Uterus (tissue), 4 donors: ENCODE measurements at regions of chr15 and their contacts with region 1.

Region 1: DNA sequence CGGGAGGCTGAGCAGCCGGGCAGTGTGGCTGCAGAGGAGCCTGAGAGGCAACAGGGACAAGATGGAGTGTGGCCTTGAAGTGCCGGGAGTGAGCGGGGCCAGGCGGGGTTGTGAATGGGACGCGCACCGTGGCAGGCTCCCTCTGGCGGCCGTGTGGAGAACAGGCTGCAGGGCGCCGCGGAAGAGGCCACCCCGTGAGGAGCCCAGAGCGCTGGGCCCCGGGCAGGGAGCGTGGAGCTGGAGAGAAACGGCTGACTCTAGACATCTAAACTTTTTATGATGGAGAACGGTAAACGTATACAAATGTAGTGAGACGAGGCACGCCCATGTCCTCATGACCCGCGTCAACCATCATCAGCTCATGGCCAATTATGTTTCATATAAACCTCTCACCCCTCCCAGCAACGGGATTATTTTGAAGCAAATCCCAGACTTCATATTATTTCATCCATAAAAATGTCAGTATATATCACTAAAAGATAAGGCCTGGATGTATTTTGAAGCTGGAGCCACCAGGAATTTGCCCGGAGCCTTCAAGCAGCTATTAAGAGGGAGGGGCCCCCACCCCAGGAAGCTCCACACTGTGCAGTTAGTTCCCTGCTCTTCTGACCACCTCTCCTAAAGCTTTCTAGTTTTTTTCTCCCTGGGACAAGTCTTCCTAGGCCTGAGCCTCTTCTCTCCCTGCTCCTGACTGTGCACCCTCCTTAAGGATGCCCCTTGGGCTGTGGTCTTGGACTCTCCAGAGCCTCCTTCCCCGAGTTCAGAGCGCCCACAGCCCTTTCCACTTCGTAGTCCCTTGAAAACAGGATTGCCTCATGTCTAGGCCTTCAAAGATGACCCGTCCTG is 149.4 kb downstream of the SMAD6 start:
- DNase-seq: peak; percentile 85 to 88
- H3K4me3 ChIP-seq: no peak overlapping the region
- H3K27ac ChIP-seq: peak overlapping the region; percentile 79 to 86
- H3K4me1 ChIP-seq: peaks cover 0 to 9% of the 10 kb centered on the region in 2 donors
- H3K27me3 ChIP-seq: no peaks in the 10 kb centered on the region
- CTCF ChIP-seq: peak; percentile 94 to 98 (median 96)
- POLR2A ChIP-seq: peak in 1 of 2 donors; percentile 15

Region 2: GRCh38 chr15:66619151-66619903 is 232.1 kb before region 1 on chr15:
- intact Hi-C with region 1: loop called (anchors 5 kb)
- DNase-seq: peak; percentile 76 to 77
- H3K4me3 ChIP-seq: no peak overlapping the region
- H3K27ac ChIP-seq: peak overlapping the region; percentile 6 to 21
- H3K4me1 ChIP-seq: peaks cover 0 to 9% of the 10 kb centered on the region in 2 donors
- H3K27me3 ChIP-seq: no peaks in the 10 kb centered on the region
- CTCF ChIP-seq: peak; percentile 89 to 94 (median 92)
- POLR2A ChIP-seq: no peak

Region 3: DNA sequence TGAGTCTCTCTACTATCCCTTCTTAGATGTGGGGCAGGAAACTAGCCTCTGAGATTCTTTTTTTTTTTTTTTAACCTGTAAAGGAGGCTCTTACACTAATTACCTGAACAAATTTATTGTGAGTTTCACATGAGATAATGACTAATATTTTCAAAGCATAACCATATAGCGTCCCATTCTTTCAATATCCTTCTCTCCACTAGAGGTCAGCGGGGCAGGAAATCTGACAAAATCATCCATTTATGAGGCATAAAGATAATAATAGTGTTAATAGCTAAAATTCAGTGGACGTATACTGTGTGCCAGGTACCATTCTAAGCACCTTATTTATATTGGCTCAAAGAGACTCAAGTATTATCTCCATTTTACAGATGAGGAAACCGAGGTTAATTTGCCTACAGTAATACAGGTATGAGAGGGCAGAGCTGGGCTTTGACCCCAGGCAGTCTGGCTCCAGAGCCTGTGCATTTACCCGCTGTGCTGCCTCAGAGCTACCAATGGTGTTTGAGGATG is 165.8 kb before region 1 on chr15:
- intact Hi-C with region 1: no loop called
- DNase-seq: no peak
- H3K4me3 ChIP-seq: no peak overlapping the region
- H3K27ac ChIP-seq: no peak overlapping the region
- H3K4me1 ChIP-seq: no peaks in the 10 kb centered on the region
- H3K27me3 ChIP-seq: no peaks in the 10 kb centered on the region
- CTCF ChIP-seq: no peak
- POLR2A ChIP-seq: no peak

Region 4: DNA sequence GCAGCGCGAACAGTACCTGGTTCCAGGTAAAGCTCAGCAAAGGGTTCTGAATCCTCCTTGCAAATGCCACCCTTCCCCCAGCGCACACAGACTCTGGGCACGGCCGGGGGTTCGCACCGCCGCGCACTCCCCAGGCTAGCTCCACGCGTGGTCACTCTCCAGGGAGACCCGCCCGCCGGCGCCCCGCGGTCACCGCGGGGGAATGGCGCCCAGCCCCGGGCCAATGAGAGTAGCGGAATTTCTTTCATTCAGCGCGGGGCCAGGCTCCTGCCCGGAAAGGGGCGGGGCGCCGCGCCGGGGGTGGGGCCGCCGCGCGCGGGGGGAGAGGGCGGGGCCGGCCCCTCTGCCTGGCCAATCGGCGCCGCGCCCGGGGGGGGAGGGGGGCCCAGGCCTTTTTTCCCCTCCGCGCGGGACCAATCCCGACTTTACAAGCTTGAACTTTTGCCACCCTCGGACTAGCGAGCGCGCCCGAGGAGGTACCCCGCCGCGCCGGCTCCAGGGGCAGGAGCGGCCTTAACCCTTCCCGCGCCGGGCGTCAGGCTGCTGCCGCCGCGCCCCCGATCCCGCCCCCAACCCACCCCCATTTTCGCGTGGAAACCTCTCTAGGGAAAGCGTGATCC is 150.5 kb before region 1 on chr15:
- intact Hi-C with region 1: loop called (anchors 5 kb)
- DNase-seq: peak; percentile 96 to 97
- H3K4me3 ChIP-seq: peak overlapping the region; percentile 64 to 66
- H3K27ac ChIP-seq: peak overlapping the region; percentile 70 to 88
- H3K4me1 ChIP-seq: peaks cover 0 to under 1% of the 10 kb centered on the region in 2 donors
- H3K27me3 ChIP-seq: no peaks in the 10 kb centered on the region
- CTCF ChIP-seq: no peak
- POLR2A ChIP-seq: peak in 1 of 2 donors; percentile 24